ENCODE measurements at regions of chr17 and their contacts with region 1.

Region 1: GRCh38 chr17:57597531-57598453 is 147.3 kb downstream of the CCDC182 start:
- DNase-seq: peak; percentile 71
- ATAC-seq: peak; percentile 72

Region 2: DNA sequence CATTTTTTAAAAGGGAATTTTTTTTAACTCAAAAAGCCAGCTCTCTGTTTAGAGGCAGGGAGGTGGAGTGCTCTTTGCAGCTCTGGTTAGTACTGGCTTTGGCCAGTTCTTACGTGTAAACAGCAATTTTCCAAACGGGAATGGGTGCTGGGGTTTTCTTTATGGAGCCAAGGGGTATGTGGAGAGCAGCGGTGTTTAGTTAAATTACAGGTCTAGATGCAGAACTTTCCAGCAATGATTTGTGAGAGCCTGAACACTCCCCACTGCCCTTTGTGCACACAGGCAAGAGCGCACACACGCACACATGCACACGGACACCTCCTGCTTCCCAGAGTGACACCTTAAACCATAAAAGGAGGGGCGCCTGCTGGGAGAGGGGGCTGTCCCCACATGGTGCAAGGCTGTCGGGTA is 201.3 kb before region 1 on chr17:
- intact Hi-C with region 1: no loop called
- DNase-seq: no peak
- ATAC-seq: no peak

Region 3: GRCh38 chr17:57552114-57552624 is 45.6 kb before region 1 on chr17:
- intact Hi-C with region 1: no loop called
- DNase-seq: peak; percentile 59
- ATAC-seq: peak; percentile 47

Region 4: DNA sequence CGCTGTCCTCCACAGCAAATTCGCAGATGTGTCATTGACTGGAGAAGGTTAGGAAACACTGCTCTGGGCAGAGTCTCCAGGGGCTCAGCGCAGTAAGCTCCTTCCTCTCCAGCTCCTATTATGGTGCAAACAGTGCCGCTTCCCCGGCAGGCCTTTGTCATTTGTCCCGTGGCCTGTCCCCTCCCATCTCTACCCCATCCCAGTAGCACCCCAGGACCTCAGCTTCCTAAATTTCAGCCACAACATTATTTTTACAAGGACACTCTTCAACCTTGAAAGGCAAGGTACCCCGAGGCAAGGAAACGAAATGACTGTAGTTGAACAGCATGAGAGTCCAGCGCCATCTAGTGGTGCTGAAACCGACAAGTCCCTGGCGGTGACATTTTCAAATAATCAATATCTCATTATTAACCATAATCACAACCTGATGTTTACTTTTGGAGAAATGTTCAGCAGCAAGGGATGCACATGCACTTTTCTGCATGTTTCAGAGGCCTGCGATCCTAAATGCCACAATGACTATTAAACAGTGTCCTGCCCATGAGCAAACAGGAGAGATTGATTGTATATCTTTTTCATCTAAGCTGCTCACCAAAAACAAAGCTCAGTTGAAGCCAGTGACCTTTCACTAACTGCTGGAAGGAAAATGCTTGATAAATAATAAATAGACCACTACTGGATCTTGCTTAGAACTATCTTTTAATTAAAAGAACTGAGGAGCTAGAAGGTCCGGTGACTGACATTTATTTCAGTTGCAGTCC is 235.6 kb after region 1 on chr17:
- intact Hi-C with region 1: loop called (anchors 10 kb)
- DNase-seq: peak; percentile 68
- ATAC-seq: peak; percentile 82

Measured in left ventricle myocardium superior (tissue), 1 donor.